ENCODE measurements at regions of chr2 and their contacts with region 1.

Region 1: GRCh38 chr2:30447149-30448045 is at the start of gene LCLAT1:
- DNase-seq: peak; percentile 96
- H3K4me3 ChIP-seq: peak within 1 kb of the TSS; percentile 97 to 98
- H3K27ac ChIP-seq: peak within 1 kb of the TSS; percentile 68 to 79
- H3K4me1 ChIP-seq: peaks cover 0 to 16% of the 10 kb centered on the region in 2 experiments; a peak in 2 of 4 replicates
- H3K27me3 ChIP-seq: no peaks in the 10 kb centered on the region
- CTCF ChIP-seq: 0 out of 2 replicates have a peak, but pooled peaks have one; percentile 28
- EP300 ChIP-seq: peak in 1 of 2 experiments; percentile 10; a peak in 1 of 4 replicates
- RAD21 ChIP-seq: peak; percentile 19; the same call in 1 of the 2 replicates
- polyA plus RNA-seq, gene LCLAT1: 6.9 and 7.3 TPM in 2 replicates

Region 2: GRCh38 chr2:30115141-30115980 is 332.0 kb before region 1 on chr2:
- CTCF ChIA-PET with region 1: no interaction called
- POLR2A ChIA-PET with region 1: no interaction called
- DNase-seq: peak; percentile 86
- H3K4me3 ChIP-seq: peak overlapping the region in 1 of 2 experiments; percentile 7; a peak in 1 of 4 replicates
- H3K27ac ChIP-seq: peak overlapping the region in 1 of 2 experiments; percentile 85; a peak in 3 of 4 replicates
- H3K4me1 ChIP-seq: peaks cover 4 to 26% of the 10 kb centered on the region in 2 experiments; a peak in 3 of 4 replicates
- H3K27me3 ChIP-seq: no peaks in the 10 kb centered on the region
- CTCF ChIP-seq: peak; percentile 100
- EP300 ChIP-seq: peak in 1 of 2 experiments; percentile 94; a peak in 2 of 4 replicates
- RAD21 ChIP-seq: peak; percentile 99

Region 3: DNA sequence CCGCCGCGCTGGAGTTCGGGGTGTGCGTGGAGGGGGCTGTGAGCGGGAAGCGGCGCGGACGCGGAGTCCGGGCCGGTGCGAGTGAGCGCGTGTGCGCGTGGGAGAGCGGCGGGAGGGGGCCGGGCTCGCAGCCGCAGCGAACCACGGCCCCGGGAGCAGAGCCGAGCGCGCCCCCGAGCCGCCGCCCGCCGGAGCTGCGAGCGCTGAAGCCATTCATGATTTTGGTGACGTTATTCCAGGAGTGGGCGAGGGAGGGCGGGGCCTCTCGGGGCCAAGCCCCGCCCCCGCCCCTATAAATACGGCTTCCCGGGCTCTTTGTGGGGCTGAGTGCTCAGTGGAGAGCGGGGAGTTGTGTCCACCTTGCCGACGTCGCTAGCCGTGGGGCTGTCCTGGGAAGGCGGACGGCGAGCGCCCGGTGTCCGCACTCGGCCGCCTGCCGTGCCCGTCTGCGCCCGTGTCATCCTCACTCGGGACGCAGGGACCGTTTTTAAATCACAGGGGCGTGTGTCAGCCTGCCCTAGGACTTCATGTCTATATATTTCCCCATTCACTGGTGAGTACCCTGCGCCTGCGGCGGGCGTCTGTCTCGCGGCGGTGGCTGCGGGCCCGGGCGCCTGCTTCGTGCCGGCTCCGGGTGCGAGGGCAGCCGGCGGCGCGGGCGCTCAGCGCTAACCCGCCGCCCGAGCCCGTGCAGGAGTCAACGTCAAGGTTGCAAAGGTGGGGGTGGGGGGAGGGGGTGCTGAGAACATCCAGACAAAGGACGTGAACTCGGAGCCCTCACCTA is 216.0 kb before region 1 on chr2 and contains the start of gene LBH:
- CTCF ChIA-PET with region 1: interaction called, 4 read pairs
- POLR2A ChIA-PET with region 1: interaction called, 10 read pairs
- DNase-seq: peak; percentile 98
- H3K4me3 ChIP-seq: peak within 1 kb of the TSS; percentile 73 to 92
- H3K27ac ChIP-seq: peak within 1 kb of the TSS; percentile 43 to 62; a peak in 3 of 4 replicates
- H3K4me1 ChIP-seq: peaks cover under 1 to 22% of the 10 kb centered on the region in 2 experiments; a peak in 2 of 4 replicates
- H3K27me3 ChIP-seq: no peaks in the 10 kb centered on the region
- CTCF ChIP-seq: no peak
- EP300 ChIP-seq: peak in 1 of 2 experiments; percentile 11; a peak in 1 of 4 replicates
- RAD21 ChIP-seq: no peak
- polyA plus RNA-seq, gene LBH: 22.8 and 26.4 TPM in 2 replicates

Region 4: GRCh38 chr2:30421604-30422443 is 25.6 kb before region 1 on chr2:
- CTCF ChIA-PET with region 1: interaction called, 3 read pairs
- POLR2A ChIA-PET with region 1: interaction called, 19 read pairs
- DNase-seq: peak; percentile 88
- H3K4me3 ChIP-seq: peak overlapping the region in 1 of 2 experiments; percentile 23; a peak in 1 of 4 replicates
- H3K27ac ChIP-seq: peak overlapping the region; percentile 76 to 94
- H3K4me1 ChIP-seq: peaks cover 20 to 24% of the 10 kb centered on the region in 2 experiments; a peak in 3 of 4 replicates
- H3K27me3 ChIP-seq: no peaks in the 10 kb centered on the region
- CTCF ChIP-seq: no peak
- EP300 ChIP-seq: peak in 1 of 2 experiments; percentile 69; a peak in 2 of 4 replicates
- RAD21 ChIP-seq: peak; percentile 48

Region 5: GRCh38 chr2:31125918-31126695 is 678.7 kb after region 1 on chr2:
- CTCF ChIA-PET with region 1: no interaction called
- POLR2A ChIA-PET with region 1: no interaction called
- DNase-seq: no peak
- H3K4me3 ChIP-seq: no peak overlapping the region
- H3K27ac ChIP-seq: no peak overlapping the region
- H3K4me1 ChIP-seq: peaks cover 0 to 17% of the 10 kb centered on the region in 2 experiments; a peak in 2 of 4 replicates
- H3K27me3 ChIP-seq: peaks cover 6% of the 10 kb centered on the region; the same call in 1 of the 2 replicates
- CTCF ChIP-seq: no peak
- EP300 ChIP-seq: no peak
- RAD21 ChIP-seq: no peak

Measured in SK-N-SH (cell line).